H1 (cell line): ENCODE measurements at regions of chr2 and their contacts with region 1.

Region 1: DNA sequence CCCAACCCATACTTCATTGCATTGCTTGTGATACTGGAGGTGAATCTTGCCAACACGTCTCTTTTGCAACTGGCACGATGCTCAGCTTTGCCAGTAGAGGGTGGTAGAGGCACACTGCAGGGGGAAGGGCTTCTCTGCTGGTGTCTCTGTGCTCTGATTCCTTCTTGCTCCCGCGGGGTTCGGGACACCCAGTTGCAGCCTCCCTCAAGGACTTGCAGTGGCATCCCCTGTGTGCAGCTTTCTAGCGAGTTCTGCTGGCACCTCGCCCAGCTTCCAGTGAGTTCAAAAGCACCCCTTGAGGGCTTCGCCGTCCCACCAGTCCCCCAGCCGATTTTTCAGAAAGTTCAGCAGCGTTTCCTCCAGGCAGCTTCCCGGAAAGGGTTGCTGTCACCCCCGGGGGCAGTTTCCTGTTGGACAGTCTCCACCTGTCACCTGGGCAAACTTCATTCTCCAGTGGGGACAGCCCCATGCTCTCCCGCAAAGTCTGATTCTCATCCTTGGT is 35.3 kb upstream of the EN1 start:
- DNase-seq: peak in 1 of 2 experiments; percentile 80
- H3K4me3 ChIP-seq: peak overlapping the region in 1 of 4 experiments; percentile 46; a peak in 2 of 8 replicates
- H3K27ac ChIP-seq: no peak overlapping the region
- H3K4me1 ChIP-seq: peaks cover 0 to 2% (median 1%) of the 10 kb centered on the region in 4 experiments; a peak in 2 of 7 replicates
- H3K27me3 ChIP-seq: no peaks in the 10 kb centered on the region; a peak in 3 of 7 replicates
- CTCF ChIP-seq: peak; percentile 93 to 100 (median 99)
- EP300 ChIP-seq: no peak
- POLR2A ChIP-seq: no peak
- RAD21 ChIP-seq: peak; percentile 96 to 97

Region 2: DNA sequence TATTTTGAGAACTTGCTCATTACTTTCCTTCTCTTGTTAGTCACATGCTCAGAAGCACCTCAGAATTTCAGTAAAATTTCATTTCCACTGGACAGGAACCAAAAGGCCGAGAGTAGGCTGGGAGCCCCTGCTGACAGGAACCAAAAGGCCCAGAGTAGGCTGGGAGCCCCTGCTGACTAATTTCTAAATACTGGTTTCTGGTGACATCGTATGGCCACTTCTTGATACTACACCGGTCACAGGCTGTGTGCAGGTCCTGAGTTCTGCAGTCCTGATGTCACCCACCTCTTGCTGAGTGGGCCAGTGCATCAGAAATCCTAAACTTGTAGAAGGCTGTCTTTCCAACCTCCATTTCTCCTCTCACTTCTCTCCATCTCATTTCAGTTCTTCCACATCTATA is 17.7 kb before region 1 on chr2:
- CTCF ChIA-PET with region 1: interaction called, 35 read pairs
- POLR2A ChIA-PET with region 1: no interaction called
- DNase-seq: peak in 1 of 2 experiments; percentile 67
- H3K4me3 ChIP-seq: no peak overlapping the region
- H3K27ac ChIP-seq: no peak overlapping the region
- H3K4me1 ChIP-seq: peaks cover 0 to 2% (median 0%) of the 10 kb centered on the region in 4 experiments; a peak in 1 of 7 replicates
- H3K27me3 ChIP-seq: peaks cover 10 to 27% (median 18%) of the 10 kb centered on the region in 4 experiments
- CTCF ChIP-seq: peak; percentile 63 to 82 (median 81)
- EP300 ChIP-seq: no peak
- POLR2A ChIP-seq: no peak
- RAD21 ChIP-seq: peak; percentile 94 to 95

Region 3: GRCh38 chr2:118913803-118914645 is 31.3 kb after region 1 on chr2:
- CTCF ChIA-PET with region 1: interaction called, 21 read pairs
- POLR2A ChIA-PET with region 1: no interaction called
- DNase-seq: no peak
- H3K4me3 ChIP-seq: no peak overlapping the region
- H3K27ac ChIP-seq: no peak overlapping the region
- H3K4me1 ChIP-seq: no peaks in the 10 kb centered on the region
- H3K27me3 ChIP-seq: no peaks in the 10 kb centered on the region
- CTCF ChIP-seq: no peak
- EP300 ChIP-seq: no peak
- POLR2A ChIP-seq: no peak
- RAD21 ChIP-seq: no peak

Region 4: GRCh38 chr2:119005051-119005450 is 122.3 kb after region 1 on chr2:
- CTCF ChIA-PET with region 1: interaction called, 19 read pairs
- POLR2A ChIA-PET with region 1: no interaction called
- DNase-seq: no peak
- H3K4me3 ChIP-seq: no peak overlapping the region
- H3K27ac ChIP-seq: no peak overlapping the region
- H3K4me1 ChIP-seq: no peaks in the 10 kb centered on the region
- H3K27me3 ChIP-seq: no peaks in the 10 kb centered on the region; a peak in 1 of 7 replicates
- CTCF ChIP-seq: no peak
- EP300 ChIP-seq: no peak
- POLR2A ChIP-seq: no peak
- RAD21 ChIP-seq: no peak

Region 5: DNA sequence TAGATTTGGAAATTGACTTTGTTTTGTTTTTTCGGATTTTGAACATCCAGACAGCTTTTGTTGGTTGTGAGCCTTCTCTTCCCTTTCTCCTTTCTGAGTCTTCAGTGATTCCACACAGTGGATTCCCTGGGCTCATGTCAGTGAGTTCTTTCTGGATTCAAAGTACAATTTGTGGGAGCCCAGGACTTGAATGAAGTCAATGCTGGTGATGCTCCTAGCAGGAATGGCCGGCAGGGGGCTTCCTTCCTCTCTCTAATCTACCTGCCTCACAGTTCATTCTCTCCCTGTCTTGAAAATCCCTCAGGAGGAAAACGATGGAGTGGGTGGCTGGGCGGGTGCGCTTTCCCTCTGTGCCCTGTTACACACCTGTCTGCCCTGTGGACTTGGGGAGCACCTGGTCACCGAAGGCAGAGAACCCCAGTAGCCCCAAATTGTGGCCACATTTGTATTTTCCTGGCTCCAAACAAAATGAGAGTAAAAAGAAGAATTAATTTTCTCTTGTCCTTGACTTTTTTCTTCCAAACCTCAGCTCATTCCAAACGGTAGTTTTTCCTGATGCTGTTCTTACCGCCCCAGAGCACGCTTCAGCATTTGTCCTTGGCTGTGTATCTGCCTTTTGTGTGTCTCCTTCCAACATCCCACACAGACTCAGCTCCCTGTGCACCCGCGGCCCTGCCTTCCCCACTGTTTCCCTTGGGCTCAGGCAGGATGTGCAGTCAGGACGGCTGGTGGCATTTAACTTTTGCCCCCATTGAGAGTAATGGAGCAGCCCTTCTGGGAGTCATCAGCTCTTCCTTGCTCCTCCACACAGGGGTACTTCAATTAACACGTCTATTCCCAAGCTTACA is 145.8 kb after region 1 on chr2:
- CTCF ChIA-PET with region 1: interaction called, 64 read pairs
- POLR2A ChIA-PET with region 1: no interaction called
- DNase-seq: peak in 1 of 2 experiments; percentile 84
- H3K4me3 ChIP-seq: no peak overlapping the region
- H3K27ac ChIP-seq: no peak overlapping the region
- H3K4me1 ChIP-seq: no peaks in the 10 kb centered on the region; a peak in 1 of 7 replicates
- H3K27me3 ChIP-seq: no peaks in the 10 kb centered on the region
- CTCF ChIP-seq: peak; percentile 59 to 78 (median 62)
- EP300 ChIP-seq: no peak
- POLR2A ChIP-seq: no peak
- RAD21 ChIP-seq: peak; percentile 66 to 81

Region 6: GRCh38 chr2:119126650-119127049 is 243.9 kb after region 1 on chr2:
- CTCF ChIA-PET with region 1: interaction called, 11 read pairs
- POLR2A ChIA-PET with region 1: no interaction called
- DNase-seq: peak; percentile 84 to 90
- H3K4me3 ChIP-seq: peak overlapping the region in 1 of 4 experiments; percentile 16; a peak in 1 of 8 replicates
- H3K27ac ChIP-seq: no peak overlapping the region
- H3K4me1 ChIP-seq: peaks cover 0 to 16% (median 8%) of the 10 kb centered on the region in 4 experiments; a peak in 4 of 7 replicates
- H3K27me3 ChIP-seq: peaks cover 0 to 9% (median 0%) of the 10 kb centered on the region in 4 experiments; a peak in 2 of 7 replicates
- CTCF ChIP-seq: peak; percentile 69 to 83 (median 77)
- EP300 ChIP-seq: no peak
- POLR2A ChIP-seq: no peak
- RAD21 ChIP-seq: peak; percentile 49 to 66

Region 7: DNA sequence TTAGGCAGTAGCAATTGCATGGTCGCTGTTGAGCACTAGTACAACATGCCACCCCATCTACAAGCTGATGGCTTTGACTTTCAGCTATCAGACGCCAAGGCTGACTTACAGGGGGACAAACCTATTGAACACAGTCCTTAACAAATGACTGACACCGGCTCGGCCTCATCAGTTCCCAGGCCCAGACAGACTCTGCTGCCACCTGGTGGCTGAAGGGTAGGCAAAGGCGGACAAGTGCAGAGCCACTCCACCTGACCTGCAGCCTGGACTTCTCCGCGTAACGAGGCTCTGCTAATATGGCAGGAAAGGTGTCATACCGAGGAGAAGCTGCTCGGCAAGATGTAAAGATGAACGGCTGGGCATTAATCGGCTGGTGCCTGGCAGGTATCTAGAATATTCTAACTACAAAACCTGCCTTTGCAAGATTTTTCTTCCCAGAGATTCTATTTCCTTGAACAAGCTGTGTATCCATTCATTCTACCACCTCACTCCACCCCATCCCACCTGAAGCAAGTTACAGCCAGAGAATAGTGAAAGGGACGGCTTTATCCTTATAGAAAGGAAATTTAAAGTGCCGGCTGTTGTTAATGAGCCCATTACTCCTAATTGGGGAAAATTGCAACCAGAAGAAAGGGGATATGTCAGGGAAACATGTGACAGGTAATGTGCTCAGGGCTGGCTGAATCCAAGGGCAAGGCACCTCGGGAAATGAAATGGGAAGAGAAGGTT is 408.3 kb after region 1 on chr2:
- CTCF ChIA-PET with region 1: interaction called, 52 read pairs
- POLR2A ChIA-PET with region 1: no interaction called
- DNase-seq: peak; percentile 66 to 89
- H3K4me3 ChIP-seq: no peak overlapping the region
- H3K27ac ChIP-seq: no peak overlapping the region
- H3K4me1 ChIP-seq: peaks cover 0 to 2% (median 0%) of the 10 kb centered on the region in 4 experiments; a peak in 2 of 7 replicates
- H3K27me3 ChIP-seq: no peaks in the 10 kb centered on the region
- CTCF ChIP-seq: peak; percentile 92 to 98 (median 98)
- EP300 ChIP-seq: no peak
- POLR2A ChIP-seq: no peak
- RAD21 ChIP-seq: peak; percentile 97 to 99